Prostate gland (tissue), 2 donors: ENCODE measurements at regions of chr1 and their contacts with region 1.

Region 1: GRCh38 chr1:172497230-172497629 is 35.7 kb upstream of the SUCO start:
- DNase-seq: peak; percentile 54
- H3K4me3 ChIP-seq: no peak overlapping the region
- H3K27ac ChIP-seq: peak overlapping the region in 1 of 2 donors; percentile 20
- H3K4me1 ChIP-seq: no peaks in the 10 kb centered on the region
- H3K27me3 ChIP-seq: no peaks in the 10 kb centered on the region
- CTCF ChIP-seq: no peak
- POLR2A ChIP-seq: no peak

Region 2: GRCh38 chr1:172485611-172486010 is 11.6 kb before region 1 on chr1:
- intact Hi-C with region 1: loop called (anchors 1 kb)
- DNase-seq: no peak
- H3K4me3 ChIP-seq: no peak overlapping the region
- H3K27ac ChIP-seq: no peak overlapping the region
- H3K4me1 ChIP-seq: no peaks in the 10 kb centered on the region
- H3K27me3 ChIP-seq: no peaks in the 10 kb centered on the region
- CTCF ChIP-seq: no peak
- POLR2A ChIP-seq: no peak